ENCODE measurements at regions of chr9 and their contacts with region 1.

Region 1: GRCh38 chr9:19397845-19398244 is 11.0 kb upstream of the ACER2 start:
- DNase-seq: no peak

Region 2: GRCh38 chr9:19358701-19359100 is 39.1 kb before region 1 on chr9:
- intact Hi-C with region 1: no loop called
- DNase-seq: no peak

Region 3: GRCh38 chr9:19456996-19457692 is 59.3 kb after region 1 on chr9:
- intact Hi-C with region 1: loop called in 1 of 2 experiments (anchors 10 kb)
- DNase-seq: no peak

Region 4: GRCh38 chr9:19471737-19472648 is 74.1 kb after region 1 on chr9:
- intact Hi-C with region 1: no loop called
- DNase-seq: no peak